Astrocyte of the cerebellum (primary cell): ENCODE measurements at regions of chr17 and their contacts with region 1.

Region 1: DNA sequence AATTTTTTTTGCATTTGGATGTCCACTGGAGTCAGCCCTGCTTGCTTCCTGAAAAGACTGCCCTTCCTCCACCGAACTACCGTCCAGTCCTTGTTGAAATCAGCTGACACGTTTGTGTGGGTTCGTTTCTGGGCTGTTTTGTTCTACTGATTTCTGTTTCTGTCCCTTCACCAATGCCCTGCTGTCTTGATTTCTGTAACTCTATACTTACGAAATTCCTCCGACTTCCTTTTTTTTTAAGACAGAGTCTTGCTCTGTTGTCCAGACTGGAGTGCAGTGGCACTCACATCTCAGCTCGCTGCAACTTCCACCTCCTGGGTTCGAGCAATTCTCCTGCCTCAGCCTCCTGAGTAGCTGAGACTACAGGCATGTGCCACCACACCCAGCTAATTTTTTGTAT is 8.4 kb upstream of the GAA start:
- DNase-seq: no peak
- H3K4me3 ChIP-seq: no peak overlapping the region
- CTCF ChIP-seq: no peak

Region 2: DNA sequence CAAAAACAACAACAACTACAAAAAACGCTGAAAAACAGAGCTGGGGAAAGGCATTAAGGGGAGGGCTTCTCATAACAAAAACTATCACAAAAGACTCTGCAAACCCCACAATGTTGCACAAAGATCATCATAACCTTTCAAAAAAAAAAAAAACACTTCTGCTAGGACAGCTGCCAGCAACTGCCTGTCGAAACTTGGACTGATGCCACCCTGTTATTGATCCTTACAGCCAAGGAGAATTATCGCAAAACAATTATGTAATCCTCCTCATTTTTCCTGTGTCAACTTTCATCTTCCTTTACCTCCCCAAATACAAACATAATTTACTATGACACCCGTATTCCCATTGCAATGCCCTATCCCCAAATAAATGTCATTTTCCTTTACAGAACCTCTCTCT is 47.3 kb before region 1 on chr17:
- in situ Hi-C with region 1: no loop called
- DNase-seq: no peak
- H3K4me3 ChIP-seq: no peak overlapping the region
- CTCF ChIP-seq: no peak

Region 3: DNA sequence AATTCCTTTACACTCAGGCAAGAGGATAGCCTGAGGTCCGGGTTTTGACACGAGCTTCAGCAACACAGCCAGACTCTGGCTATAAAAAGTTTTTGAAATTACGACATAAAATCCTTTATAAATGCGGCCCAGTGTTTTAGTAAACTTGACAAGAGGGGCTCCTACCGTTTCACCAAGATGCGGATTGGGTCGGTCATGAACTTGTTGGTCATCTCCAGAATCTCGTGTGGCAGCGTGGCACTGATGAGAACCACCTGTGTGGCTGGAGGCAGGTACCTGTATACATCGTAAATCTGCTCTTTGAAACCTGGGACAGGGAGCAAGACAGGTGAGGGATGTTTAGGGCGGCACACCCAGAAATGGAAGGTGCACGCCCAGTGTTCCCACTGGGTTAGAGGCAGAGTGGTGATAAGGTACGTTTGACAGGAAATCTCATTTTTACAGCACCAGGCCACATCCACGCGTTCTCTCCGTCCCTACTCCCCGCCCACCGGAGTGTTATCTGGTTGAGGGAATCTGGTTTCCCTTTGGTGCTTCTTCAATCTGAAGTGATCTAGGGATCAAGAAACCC is 46.0 kb after region 1 on chr17:
- in situ Hi-C with region 1: loop called (anchors 5 kb)
- DNase-seq: no peak
- H3K4me3 ChIP-seq: no peak overlapping the region
- CTCF ChIP-seq: no peak

Region 4: GRCh38 chr17:80169784-80170500 is 77.0 kb after region 1 on chr17 and contains the start of gene CARD14:
- in situ Hi-C with region 1: loop called (anchors 5 kb)
- DNase-seq: no peak
- H3K4me3 ChIP-seq: no peak within 1 kb of the TSS
- CTCF ChIP-seq: no peak

Region 5: DNA sequence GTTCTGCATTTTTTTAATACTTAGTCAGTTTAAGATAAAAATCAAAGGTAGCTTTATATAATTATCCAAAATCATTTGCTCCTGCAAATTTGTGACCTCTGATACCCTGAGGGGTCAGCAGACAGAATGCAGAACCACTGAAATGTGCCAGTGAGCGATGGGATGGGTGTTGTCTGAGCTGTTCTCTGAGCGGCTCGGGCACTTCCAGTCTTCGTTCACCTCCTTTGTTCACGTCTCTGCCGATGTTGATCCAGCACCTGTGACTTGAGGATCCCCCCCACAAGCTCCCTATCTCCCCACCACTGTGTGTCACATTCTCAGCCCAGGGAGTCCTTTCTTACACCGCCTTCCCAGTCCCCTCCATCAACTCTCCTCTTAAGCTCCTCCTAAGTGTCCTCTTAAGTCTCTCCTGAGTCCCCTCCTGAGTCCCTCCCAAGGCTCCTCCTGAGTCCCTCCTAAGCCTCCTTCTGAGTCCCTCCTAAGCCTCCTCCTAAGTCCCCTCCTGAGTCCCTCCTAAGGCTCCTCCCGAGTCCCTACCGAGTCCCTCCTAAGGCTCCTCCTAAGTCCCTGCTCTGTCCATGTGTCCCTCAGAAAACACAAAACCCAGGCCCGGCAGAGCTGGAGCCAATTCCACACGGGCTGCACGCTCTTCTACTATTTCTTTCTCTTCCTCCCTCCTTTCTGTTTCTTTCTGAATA is 215.2 kb after region 1 on chr17:
- in situ Hi-C with region 1: no loop called
- DNase-seq: no peak
- H3K4me3 ChIP-seq: no peak overlapping the region
- CTCF ChIP-seq: no peak